Left cardiac atrium (tissue), 4 donors: ENCODE measurements at regions of chr17 and their contacts with region 1.

Region 1: GRCh38 chr17:35981908-35982330 is 622 bp upstream of the CCL16 start:
- DNase-seq: no peak
- ATAC-seq: no peak

Region 2: DNA sequence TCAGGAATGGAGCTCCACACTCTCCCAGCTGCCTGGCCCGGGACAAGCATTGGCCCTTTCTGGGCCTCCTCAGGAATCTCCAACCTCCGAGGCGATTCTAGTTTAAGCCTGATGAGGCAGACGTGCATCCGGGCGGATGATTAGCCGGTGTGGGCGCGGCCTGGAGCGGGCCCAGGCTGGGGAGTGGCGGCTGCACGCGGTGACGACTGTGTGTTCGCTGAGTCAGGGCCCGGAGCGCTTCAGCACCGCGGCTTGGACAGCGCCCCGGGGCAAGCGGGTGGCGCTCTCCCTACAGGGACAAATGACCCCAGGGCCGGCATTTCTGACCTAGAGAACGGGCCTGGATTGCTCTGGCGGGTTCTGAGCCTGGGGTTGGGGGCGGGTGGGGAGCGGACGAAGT is 482.0 kb after region 1 on chr17:
- intact Hi-C with region 1: loop called in 1 of 2 experiments (anchors 10 kb)
- DNase-seq: peak; percentile 59
- ATAC-seq: peak; percentile 94 to 96